GM10248 (cell line): ENCODE measurements at regions of chr1 and their contacts with region 1.

Region 1: DNA sequence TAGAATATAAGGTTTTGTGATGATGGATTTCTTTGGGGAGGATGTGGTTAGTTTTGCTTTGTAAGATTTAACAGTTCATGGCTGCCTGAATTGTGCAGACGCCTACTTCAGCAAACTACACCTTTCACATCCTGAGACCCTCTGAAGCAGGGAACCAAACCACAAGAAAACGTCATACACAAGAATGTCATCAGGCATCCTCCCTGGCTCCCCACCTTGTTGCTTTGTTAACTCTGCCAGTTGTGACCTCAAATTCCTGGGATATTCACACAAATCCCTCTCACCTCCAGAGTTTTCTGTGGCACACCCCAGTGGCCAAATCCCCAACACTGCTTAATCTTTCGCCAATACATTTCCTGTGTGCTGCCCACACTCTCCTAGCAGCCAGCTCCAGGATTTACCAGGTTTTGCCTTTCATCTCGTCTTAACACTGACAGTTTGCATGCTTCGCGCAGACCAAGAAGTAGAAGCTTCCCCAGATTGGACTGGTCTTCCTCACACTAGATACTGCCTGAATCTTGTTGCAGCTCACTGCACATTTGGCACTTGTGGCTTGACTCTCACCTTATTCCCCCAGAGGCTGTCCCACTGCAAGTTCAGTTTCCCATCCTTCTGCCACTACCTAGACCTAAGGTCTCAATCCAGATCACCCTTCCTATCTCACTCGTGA is 51.1 kb upstream of the CTTNBP2NL start:
- DNase-seq: no peak
- CTCF ChIP-seq: no peak

Region 2: DNA sequence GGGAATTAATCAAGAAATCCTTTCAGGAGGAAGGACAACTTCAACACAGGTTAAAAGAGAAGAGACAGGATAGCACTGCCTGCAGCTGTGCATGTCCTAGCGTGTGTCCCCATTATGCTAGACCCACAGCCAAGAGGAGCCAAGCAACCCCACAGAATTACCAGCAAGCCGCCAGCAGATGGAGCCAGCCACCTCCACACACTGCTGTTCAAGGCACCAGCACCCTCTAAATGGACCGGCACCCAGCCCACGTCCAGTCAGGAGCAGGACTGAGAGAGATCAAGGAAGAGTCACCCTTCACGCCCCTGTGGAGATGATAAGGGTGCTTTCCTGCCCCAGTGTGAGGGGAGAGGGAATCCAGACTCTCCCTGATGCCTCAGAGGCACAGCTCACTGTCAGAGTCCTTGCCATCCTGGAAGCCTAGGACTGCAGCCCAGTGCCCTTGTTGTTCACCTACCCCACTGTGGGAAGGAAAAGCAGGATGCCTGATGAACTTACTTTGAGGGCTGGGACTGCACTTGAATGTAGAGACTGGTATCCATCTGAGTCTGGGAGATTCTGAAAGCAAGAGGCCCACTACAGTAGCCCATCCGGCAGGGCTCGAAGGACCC is 14.0 kb after region 1 on chr1:
- CTCF ChIA-PET with region 1: interaction called, 10 read pairs
- POLR2A ChIA-PET with region 1: no interaction called
- DNase-seq: peak; percentile 57
- CTCF ChIP-seq: peak; percentile 80